ENCODE measurements at regions of chr20 and their contacts with region 1.

Region 1: GRCh38 chr20:49446808-49447207 is 35.7 kb downstream of the KCNB1 start:
- DNase-seq: peak; percentile 96
- H3K4me3 ChIP-seq: no peak overlapping the region
- H3K27ac ChIP-seq: peak overlapping the region; percentile 83 to 92 (median 86)
- H3K4me1 ChIP-seq: peaks cover 0 to 79% (median 65%) of the 10 kb centered on the region in 4 donors
- H3K27me3 ChIP-seq: no peaks in the 10 kb centered on the region
- CTCF ChIP-seq: peak in 2 of 4 experiments; percentile 14 to 37
- EP300 ChIP-seq: peak in 3 of 4 donors; percentile 11 to 82 (median 57)
- POLR2A ChIP-seq: no peak

Region 2: DNA sequence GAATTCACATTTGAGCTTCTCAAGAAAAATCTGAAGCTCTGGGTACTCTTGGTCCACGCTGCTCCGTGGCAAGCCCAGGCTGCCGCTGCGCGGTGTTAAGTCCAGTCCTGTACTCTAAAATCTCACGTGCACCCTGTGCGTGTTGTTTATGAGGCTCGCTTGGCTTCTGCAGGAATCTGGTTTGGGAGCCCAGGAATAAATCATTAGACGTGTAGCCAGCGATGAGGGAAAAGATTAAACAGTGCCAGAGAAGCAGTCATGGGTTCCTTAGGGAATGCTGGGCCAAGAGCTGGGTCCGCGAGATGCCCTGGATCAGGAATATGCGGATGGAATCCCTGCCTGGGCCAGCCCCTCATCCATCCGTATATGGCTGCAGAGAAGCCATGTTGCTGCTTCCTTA is 51.6 kb before region 1 on chr20:
- intact Hi-C with region 1: loop called (anchors 2 kb)
- DNase-seq: peak; percentile 96
- H3K4me3 ChIP-seq: peak overlapping the region in 3 of 4 donors; percentile 14 to 26 (median 20)
- H3K27ac ChIP-seq: peak overlapping the region; percentile 89 to 97 (median 92)
- H3K4me1 ChIP-seq: peaks cover 0 to 75% (median 65%) of the 10 kb centered on the region in 4 donors
- H3K27me3 ChIP-seq: no peaks in the 10 kb centered on the region
- CTCF ChIP-seq: no peak
- EP300 ChIP-seq: peak; percentile 88 to 98 (median 94)
- POLR2A ChIP-seq: peak; percentile 19 to 48

Region 3: DNA sequence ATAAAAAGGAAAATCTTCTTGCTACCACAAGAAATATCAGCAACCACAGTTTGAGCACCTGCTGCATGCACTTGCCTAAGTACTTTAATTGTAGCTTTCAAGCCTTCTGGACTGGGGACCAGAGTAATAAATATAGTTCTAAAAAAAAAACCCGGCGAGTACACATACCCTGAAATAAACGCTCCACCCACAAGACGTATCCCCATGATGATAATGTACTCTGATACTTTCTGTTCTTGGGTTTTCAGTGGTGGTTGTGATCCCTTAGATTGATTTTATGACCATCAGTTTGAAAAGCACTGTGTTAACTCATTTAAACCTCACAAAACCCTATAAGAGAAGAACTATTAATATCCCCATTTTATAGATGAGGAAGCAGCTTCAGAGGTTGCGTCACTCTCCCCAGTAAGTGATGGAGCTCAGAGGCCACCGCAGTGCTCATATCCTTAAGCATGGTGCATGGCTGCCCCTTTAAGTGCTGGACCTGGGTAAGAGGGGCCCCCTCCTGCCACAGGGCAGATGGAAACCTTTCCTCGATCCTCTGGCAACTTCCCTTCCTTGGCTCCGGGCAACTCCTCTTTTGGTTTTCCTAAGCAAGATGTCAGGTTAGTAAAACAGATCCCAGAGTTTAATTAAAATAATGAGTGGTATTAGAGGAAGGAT is 31.7 kb before region 1 on chr20:
- intact Hi-C with region 1: loop called (anchors 2 kb)
- DNase-seq: peak; percentile 95
- H3K4me3 ChIP-seq: no peak overlapping the region
- H3K27ac ChIP-seq: peak overlapping the region; percentile 81 to 97 (median 90)
- H3K4me1 ChIP-seq: peaks cover 0 to 98% (median 92%) of the 10 kb centered on the region in 4 donors
- H3K27me3 ChIP-seq: no peaks in the 10 kb centered on the region
- CTCF ChIP-seq: no peak
- EP300 ChIP-seq: peak; percentile 82 to 97 (median 93)
- POLR2A ChIP-seq: no peak

Region 4: GRCh38 chr20:49424536-49424935 is 22.3 kb before region 1 on chr20:
- intact Hi-C with region 1: loop called (anchors 2 kb)
- DNase-seq: peak; percentile 70
- H3K4me3 ChIP-seq: no peak overlapping the region
- H3K27ac ChIP-seq: peak overlapping the region in 2 of 4 donors; percentile 50 to 64
- H3K4me1 ChIP-seq: peaks cover 0 to 68% (median 62%) of the 10 kb centered on the region in 4 donors
- H3K27me3 ChIP-seq: no peaks in the 10 kb centered on the region
- CTCF ChIP-seq: no peak
- EP300 ChIP-seq: no peak
- POLR2A ChIP-seq: no peak